H1 (cell line): ENCODE measurements at regions of chr7 and their contacts with region 1.

Region 1: GRCh38 chr7:2471396-2471795 is 4.8 kb downstream of the GRIFIN start:
- DNase-seq: no peak
- H3K4me3 ChIP-seq: no peak overlapping the region
- H3K27ac ChIP-seq: no peak overlapping the region
- H3K4me1 ChIP-seq: peaks cover 0 to 21% (median 17%) of the 10 kb centered on the region in 4 experiments; a peak in 6 of 7 replicates
- H3K27me3 ChIP-seq: no peaks in the 10 kb centered on the region; a peak in 2 of 7 replicates
- CTCF ChIP-seq: no peak
- EP300 ChIP-seq: no peak
- POLR2A ChIP-seq: no peak
- RAD21 ChIP-seq: no peak

Region 2: DNA sequence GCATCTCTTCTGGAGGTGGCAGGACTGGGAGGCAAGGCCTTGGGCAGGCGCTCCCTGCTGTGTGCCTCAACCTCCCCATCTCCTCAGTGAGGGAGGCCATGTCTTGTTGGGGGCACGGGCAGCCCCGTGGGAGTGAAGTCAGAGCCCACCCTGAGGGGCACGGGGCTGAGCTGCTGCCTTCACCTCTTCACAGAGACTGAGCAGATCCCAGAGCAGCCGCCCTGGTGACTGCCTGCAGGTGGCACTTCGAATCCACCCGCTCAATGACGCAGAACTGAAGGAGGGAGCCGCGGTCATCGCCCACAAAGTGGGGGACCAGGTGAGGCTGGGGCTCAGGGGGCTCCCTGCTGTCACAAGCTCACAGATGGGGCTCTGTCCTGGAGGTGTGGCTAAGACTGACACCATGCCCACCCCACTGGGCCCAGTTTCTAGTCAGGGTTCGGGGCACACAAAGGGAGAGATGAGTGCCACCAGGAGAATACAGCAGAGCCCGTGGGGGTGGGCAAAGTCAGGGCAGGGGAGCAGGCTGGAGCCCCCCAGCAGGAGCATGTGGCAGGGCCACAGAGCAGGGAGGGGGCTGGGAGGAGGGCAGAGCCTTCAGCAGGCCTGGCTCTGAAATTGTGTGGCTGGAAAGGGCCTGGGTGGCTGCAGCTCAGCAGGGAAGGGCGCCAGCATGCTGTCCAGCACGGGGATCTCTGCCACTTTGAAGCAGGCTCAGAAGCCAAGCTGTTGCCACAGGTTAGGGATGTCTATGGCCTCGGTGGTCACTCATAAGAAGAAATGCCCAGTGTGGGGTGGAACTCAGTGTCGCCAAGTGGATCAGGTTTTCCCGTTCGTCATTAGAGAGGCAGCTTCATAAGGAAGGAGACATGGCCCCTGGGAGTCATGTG is 86.8 kb before region 1 on chr7:
- CTCF ChIA-PET with region 1: interaction called, 16 read pairs
- POLR2A ChIA-PET with region 1: no interaction called
- DNase-seq: no peak
- H3K4me3 ChIP-seq: no peak overlapping the region
- H3K27ac ChIP-seq: no peak overlapping the region
- H3K4me1 ChIP-seq: peaks cover 0 to 5% (median 0%) of the 10 kb centered on the region in 4 experiments; a peak in 1 of 7 replicates
- H3K27me3 ChIP-seq: no peaks in the 10 kb centered on the region
- CTCF ChIP-seq: peak in 2 of 3 experiments; percentile 33; a peak in 2 of 4 replicates
- EP300 ChIP-seq: no peak
- POLR2A ChIP-seq: no peak
- RAD21 ChIP-seq: peak; percentile 46 to 64

Region 3: DNA sequence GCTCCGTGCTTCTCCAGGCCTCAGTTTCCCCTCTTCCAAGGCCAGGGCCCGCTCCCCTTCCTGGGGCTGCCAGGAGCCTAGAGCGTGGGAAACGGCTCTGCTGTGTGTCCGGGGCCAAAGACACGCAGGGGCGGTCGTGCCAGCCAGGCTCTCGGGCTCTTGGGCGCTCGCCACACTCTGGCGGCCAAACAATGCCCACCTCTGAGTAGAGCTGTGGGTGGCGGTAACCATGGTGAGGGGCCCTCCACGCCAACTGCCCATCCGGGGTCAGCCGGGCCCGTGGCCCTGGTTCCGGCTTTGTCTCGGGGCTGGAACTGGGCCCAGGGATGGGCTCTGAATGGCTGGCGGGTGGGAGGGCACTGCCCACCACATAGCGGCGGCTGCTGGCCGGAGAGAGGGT is 11.2 kb before region 1 on chr7:
- CTCF ChIA-PET with region 1: interaction called, 71 read pairs
- POLR2A ChIA-PET with region 1: interaction called, 7 read pairs
- DNase-seq: no peak
- H3K4me3 ChIP-seq: no peak overlapping the region
- H3K27ac ChIP-seq: no peak overlapping the region
- H3K4me1 ChIP-seq: no peaks in the 10 kb centered on the region
- H3K27me3 ChIP-seq: no peaks in the 10 kb centered on the region
- CTCF ChIP-seq: no peak
- EP300 ChIP-seq: no peak
- POLR2A ChIP-seq: no peak
- RAD21 ChIP-seq: no peak

Region 4: GRCh38 chr7:2497500-2498336 is 26.3 kb after region 1 on chr7:
- CTCF ChIA-PET with region 1: interaction called, 67 read pairs
- POLR2A ChIA-PET with region 1: interaction called, 4 read pairs
- DNase-seq: peak in 1 of 2 experiments; percentile 64
- H3K4me3 ChIP-seq: no peak overlapping the region
- H3K27ac ChIP-seq: 0 out of 2 replicates have a peak overlapping the region, but pooled peaks have one; percentile 29
- H3K4me1 ChIP-seq: peaks cover 0 to 53% (median 37%) of the 10 kb centered on the region in 4 experiments; a peak in 6 of 7 replicates
- H3K27me3 ChIP-seq: no peaks in the 10 kb centered on the region
- CTCF ChIP-seq: no peak
- EP300 ChIP-seq: no peak
- POLR2A ChIP-seq: no peak
- RAD21 ChIP-seq: no peak

Region 5: DNA sequence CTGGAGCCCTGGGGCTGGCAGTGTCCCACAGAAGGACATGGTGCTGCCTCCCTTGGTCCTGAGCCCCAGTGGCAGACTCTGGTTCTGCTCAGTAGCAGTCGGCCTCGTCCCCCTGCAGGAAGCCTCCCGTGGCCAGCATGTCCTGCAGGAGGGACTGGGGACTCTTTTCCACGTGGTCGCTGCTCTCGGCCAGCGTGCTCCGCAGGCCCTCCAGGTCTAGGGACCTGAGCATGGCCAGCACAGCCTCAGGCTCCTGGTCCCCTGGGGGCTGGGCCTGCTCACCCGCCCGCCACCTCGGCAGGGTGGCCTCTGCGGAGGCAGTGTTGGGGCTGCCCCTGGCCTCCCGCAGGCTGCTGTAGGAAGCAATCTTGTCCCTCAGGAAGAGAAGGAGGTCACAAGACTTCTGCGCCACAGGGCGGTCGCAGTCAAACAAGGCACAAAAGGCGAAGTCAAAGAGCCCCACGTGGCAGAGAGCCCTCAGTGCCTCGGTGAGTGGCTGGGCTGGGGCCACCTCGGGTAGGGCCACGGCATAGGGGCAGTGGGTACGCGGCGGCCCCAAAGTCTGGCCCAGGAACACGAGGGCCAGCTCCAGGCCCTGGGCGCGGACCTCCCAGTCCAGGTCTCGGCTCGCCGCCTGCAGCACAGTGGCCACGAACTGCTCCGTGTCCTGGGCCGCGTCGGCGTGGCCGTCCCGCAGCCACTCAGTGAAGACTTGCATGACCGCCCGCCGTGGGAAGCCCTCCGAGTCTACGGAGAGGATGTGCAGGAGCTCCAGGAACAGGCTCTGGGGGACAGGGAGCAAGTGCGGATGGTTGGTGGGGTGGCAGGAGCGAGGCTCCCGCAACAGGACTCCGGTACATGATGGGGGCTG is 66.8 kb after region 1 on chr7:
- CTCF ChIA-PET with region 1: interaction called, 13 read pairs
- POLR2A ChIA-PET with region 1: interaction called, 3 read pairs
- DNase-seq: no peak
- H3K4me3 ChIP-seq: no peak overlapping the region
- H3K27ac ChIP-seq: no peak overlapping the region
- H3K4me1 ChIP-seq: no peaks in the 10 kb centered on the region
- H3K27me3 ChIP-seq: no peaks in the 10 kb centered on the region
- CTCF ChIP-seq: peak; percentile 5 to 24 (median 21)
- EP300 ChIP-seq: no peak
- POLR2A ChIP-seq: no peak
- RAD21 ChIP-seq: no peak

Region 6: DNA sequence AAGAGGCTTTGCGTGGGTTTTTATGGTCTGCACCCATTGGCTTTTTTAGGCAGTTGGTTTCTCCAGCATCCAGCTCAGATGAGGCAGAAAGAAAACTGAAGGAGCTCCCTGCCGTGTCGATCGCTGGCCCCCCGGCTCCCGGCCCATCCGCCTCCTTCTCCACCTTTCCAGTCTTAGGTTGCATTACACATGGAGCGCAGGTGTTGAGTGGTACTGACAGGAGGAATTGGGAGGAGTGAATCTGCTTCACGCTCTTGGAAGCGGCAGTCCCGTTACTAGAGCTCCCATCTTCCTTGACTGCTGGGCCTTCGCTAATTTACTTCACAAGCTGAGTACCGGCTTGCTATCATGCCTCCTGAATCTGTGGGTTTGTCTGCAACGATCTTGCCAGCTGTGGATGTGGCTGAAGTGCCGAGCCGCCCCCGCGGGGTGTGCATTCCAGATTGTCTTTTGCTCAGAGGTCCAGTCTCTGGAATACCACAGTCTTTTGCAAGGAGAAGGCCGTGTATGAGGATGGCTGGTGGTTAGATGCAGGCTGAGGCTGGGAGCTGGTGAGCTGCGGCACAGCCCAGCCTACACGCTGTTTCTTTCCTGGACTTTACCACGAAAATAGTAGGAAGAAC is 104.4 kb after region 1 on chr7:
- CTCF ChIA-PET with region 1: interaction called, 14 read pairs
- POLR2A ChIA-PET with region 1: no interaction called
- DNase-seq: no peak
- H3K4me3 ChIP-seq: no peak overlapping the region
- H3K27ac ChIP-seq: no peak overlapping the region
- H3K4me1 ChIP-seq: peaks cover 0 to 2% (median 0%) of the 10 kb centered on the region in 4 experiments; a peak in 1 of 7 replicates
- H3K27me3 ChIP-seq: no peaks in the 10 kb centered on the region
- CTCF ChIP-seq: no peak
- EP300 ChIP-seq: no peak
- POLR2A ChIP-seq: no peak
- RAD21 ChIP-seq: no peak